Mammary epithelial cell (primary cell): ENCODE measurements at regions of chr14 and their contacts with region 1.

Region 1: GRCh38 chr14:105465584-105466031 is 9.0 kb upstream of the CRIP2 start:
- DNase-seq: peak; percentile 27
- H3K4me3 ChIP-seq: no peak overlapping the region
- H3K27ac ChIP-seq: no peak overlapping the region
- H3K4me1 ChIP-seq: peaks cover 32% of the 10 kb centered on the region
- H3K27me3 ChIP-seq: no peaks in the 10 kb centered on the region
- CTCF ChIP-seq: no peak

Region 2: DNA sequence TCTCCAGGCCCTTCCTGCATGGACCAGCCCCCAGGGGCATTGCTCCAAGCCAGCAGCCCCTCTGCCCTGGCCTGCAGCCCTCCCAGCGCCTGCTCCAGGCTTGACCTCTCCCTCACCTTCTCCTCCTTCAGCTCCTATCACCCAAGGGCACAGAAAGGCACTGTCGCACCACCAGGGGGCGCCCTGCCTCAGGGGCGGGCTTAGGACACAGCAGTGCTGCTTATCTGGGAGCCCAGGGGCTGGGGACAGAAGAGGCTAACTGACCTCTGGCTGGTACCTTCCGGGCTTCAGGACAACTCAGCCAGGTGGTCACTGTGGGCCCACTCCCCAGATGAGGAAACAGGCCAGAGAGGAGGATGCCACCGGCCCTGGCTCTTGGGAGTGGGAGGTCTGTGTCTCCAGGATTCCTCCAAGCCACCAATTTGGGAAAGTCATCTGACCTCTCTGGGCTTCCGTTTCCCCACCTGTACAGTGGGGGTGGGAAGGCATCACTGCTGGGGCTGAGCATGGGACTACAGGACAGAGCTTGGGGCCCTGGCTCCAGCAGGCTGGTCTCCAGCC is 375.0 kb before region 1 on chr14:
- CTCF ChIA-PET with region 1: no interaction called
- dilution Hi-C with region 1: no loop called
- in situ Hi-C with region 1: no loop called
- intact Hi-C with region 1: no loop called
- DNase-seq: peak; percentile 73
- H3K4me3 ChIP-seq: no peak overlapping the region
- H3K27ac ChIP-seq: no peak overlapping the region
- H3K4me1 ChIP-seq: peaks cover 64% of the 10 kb centered on the region
- H3K27me3 ChIP-seq: no peaks in the 10 kb centered on the region
- CTCF ChIP-seq: peak; percentile 93 to 97

Region 3: GRCh38 chr14:105223260-105223659 is 242.3 kb before region 1 on chr14:
- CTCF ChIA-PET with region 1: no interaction called
- dilution Hi-C with region 1: no loop called
- in situ Hi-C with region 1: no loop called
- intact Hi-C with region 1: no loop called
- DNase-seq: no peak
- H3K4me3 ChIP-seq: no peak overlapping the region
- H3K27ac ChIP-seq: no peak overlapping the region
- H3K4me1 ChIP-seq: no peaks in the 10 kb centered on the region
- H3K27me3 ChIP-seq: no peaks in the 10 kb centered on the region
- CTCF ChIP-seq: no peak

Region 4: DNA sequence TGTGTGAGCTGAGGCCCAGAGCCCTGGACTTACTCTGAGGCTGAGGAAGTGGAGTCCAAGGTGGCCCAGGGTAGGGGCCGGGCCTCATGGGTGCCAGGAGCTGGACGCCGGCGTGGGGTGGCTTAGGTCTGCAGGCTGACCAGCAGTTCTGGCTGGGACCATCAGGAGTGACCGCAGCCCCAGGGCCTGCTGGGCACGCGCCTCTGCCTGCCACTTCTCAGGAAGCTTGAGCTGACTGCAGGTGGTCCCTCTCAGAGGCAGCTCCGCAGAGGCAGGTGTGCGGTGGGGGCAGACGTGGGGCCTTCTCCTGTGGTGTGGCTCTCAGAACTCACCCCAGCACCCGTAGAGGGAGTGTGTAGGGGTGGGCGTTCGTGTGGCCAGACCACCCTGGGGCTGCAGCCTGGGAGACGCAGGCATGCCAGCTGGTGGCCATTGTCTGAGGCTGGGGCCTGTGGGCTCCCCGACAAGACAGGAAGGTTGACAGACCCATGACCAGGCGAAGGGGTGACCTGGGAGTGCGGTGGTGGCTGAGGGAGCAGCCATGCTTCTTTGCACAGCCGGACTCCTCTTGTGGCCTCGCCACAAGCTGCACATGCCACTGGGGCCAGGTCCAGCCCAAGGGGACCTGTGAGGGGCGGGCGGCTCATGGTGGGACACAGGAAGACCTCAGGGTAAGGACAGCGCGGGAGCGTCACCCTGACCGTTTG is 107.3 kb before region 1 on chr14:
- CTCF ChIA-PET with region 1: no interaction called
- dilution Hi-C with region 1: loop called (anchors 5 kb)
- in situ Hi-C with region 1: no loop called
- intact Hi-C with region 1: no loop called
- DNase-seq: no peak
- H3K4me3 ChIP-seq: no peak overlapping the region
- H3K27ac ChIP-seq: no peak overlapping the region
- H3K4me1 ChIP-seq: no peaks in the 10 kb centered on the region
- H3K27me3 ChIP-seq: no peaks in the 10 kb centered on the region
- CTCF ChIP-seq: no peak

Region 5: DNA sequence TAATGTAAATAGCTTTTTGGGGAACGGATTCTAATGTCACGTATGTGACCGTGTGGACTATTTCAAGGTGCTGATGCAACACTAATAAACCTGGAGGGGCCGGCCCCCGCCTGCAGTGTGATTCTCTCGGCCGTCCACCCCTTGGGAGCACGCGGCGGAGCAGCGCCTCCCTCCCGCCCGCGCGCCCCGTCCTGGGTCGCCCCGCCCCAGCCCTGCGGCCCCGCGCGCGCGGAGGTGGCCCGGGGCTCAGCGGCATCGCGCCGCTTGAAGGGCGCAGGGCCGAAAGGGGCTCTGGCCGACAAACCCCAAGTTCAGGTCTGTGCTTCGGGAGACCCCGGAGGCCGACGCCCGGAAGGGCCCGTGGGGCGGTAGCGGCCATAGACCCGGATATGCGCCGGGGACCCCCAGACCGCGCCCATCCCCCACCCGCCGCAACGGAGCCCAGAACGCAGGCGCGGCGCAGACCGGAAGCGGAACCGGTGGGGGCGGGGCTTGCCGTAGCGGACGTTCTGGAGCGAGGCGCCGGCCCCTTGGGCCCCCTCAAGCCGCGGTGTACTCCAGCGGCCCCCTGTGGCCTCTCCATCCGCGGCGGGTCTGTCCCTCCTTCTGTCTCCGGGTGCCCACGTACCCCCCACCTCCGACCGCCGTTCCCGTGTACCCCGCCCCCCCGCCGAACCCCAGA is 67.4 kb before region 1 on chr14 and contains the start of gene TEX22:
- CTCF ChIA-PET with region 1: no interaction called
- dilution Hi-C with region 1: loop called (anchors 5 kb)
- in situ Hi-C with region 1: no loop called
- intact Hi-C with region 1: no loop called
- DNase-seq: peak; percentile 26
- H3K4me3 ChIP-seq: peak within 1 kb of the TSS; percentile 69 to 83 (median 70)
- H3K27ac ChIP-seq: peak within 1 kb of the TSS; percentile 8
- H3K4me1 ChIP-seq: peaks cover 12% of the 10 kb centered on the region
- H3K27me3 ChIP-seq: no peaks in the 10 kb centered on the region
- CTCF ChIP-seq: no peak
- total RNA-seq, gene TEX22: 0.17 to 2.3 TPM

Region 6: GRCh38 chr14:105517096-105517495 is 51.5 kb after region 1 on chr14:
- CTCF ChIA-PET with region 1: no interaction called
- dilution Hi-C with region 1: loop called (anchors 5 kb)
- in situ Hi-C with region 1: no loop called
- intact Hi-C with region 1: no loop called
- DNase-seq: no peak
- H3K4me3 ChIP-seq: no peak overlapping the region
- H3K27ac ChIP-seq: no peak overlapping the region
- H3K4me1 ChIP-seq: no peaks in the 10 kb centered on the region
- H3K27me3 ChIP-seq: no peaks in the 10 kb centered on the region
- CTCF ChIP-seq: no peak